CD4-positive, alpha-beta T cell (primary cell): ENCODE measurements at regions of chr5 and their contacts with region 1.

Region 1: DNA sequence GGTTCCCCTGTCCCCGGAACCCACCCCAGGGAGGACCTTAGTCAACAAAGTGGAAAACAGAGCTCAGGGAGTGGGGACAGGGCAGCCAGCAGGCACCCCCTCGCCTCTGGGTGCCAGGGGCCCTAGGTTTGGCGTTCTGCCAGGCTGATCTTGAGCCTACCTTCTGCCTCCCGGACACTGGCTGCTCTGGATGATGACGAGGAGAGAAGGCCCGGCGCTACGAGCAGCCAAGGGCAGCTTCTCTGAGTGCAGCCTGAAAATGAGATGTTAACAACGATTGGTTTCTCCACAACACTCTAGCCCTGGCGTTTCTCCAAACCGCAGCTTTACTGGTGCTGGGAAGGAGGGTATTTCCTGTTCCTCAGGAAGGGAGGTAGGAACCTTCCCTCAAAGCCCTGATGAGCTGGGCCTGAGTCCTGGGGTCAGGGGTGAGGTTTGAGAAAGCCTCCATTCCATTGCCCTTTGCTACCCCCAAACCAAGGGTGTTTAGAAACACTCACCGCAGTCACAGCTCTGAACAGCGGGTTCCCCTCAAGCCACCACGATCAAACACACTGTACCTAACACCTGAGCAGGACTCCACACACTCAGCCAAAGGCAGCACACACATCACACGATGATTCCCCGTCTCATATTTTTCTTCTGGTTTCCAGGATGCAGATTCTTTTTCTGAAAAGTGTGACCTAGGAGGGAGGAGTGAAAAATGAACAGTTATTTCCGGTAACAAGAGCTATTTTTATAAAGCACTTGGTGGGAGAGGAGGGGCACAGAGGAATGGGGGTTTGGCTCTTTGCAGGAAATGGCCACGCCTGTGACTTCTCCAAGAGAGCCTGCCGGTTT is at the start of gene STING1:
- DNase-seq: peak; percentile 40 to 88 (median 60)
- ATAC-seq: peak; percentile 71
- H3K4me3 ChIP-seq: peak within 1 kb of the TSS; percentile 81
- H3K4me3 Mint-ChIP-seq: peak within 1 kb of the TSS; percentile 91
- H3K27ac ChIP-seq: peak within 1 kb of the TSS; percentile 82
- H3K27ac Mint-ChIP-seq: peak within 1 kb of the TSS; percentile 92
- H3K4me1 ChIP-seq: peaks cover 57% of the 10 kb centered on the region
- H3K4me1 Mint-ChIP-seq: peaks cover 37% of the 10 kb centered on the region
- H3K27me3 ChIP-seq: no peaks in the 10 kb centered on the region
- H3K27me3 Mint-ChIP-seq: no peaks in the 10 kb centered on the region
- CTCF ChIP-seq: no peak
- total RNA-seq, gene STING1: 155 to 168 TPM

Region 2: GRCh38 chr5:139430015-139430414 is 52.3 kb before region 1 on chr5:
- CTCF ChIA-PET with region 1: no interaction called
- POLR2A ChIA-PET with region 1: interaction called, 74 read pairs
- intact Hi-C with region 1: no loop called
- DNase-seq: no peak
- ATAC-seq: peak; percentile 87
- H3K4me3 ChIP-seq: no peak overlapping the region
- H3K4me3 Mint-ChIP-seq: no peak overlapping the region
- H3K27ac ChIP-seq: peak overlapping the region in 1 of 2 donors; percentile 41
- H3K27ac Mint-ChIP-seq: peak overlapping the region; percentile 70
- H3K4me1 ChIP-seq: peaks cover 4% of the 10 kb centered on the region
- H3K4me1 Mint-ChIP-seq: peaks cover 16% of the 10 kb centered on the region
- H3K27me3 ChIP-seq: no peaks in the 10 kb centered on the region
- H3K27me3 Mint-ChIP-seq: no peaks in the 10 kb centered on the region
- CTCF ChIP-seq: no peak

Region 3: DNA sequence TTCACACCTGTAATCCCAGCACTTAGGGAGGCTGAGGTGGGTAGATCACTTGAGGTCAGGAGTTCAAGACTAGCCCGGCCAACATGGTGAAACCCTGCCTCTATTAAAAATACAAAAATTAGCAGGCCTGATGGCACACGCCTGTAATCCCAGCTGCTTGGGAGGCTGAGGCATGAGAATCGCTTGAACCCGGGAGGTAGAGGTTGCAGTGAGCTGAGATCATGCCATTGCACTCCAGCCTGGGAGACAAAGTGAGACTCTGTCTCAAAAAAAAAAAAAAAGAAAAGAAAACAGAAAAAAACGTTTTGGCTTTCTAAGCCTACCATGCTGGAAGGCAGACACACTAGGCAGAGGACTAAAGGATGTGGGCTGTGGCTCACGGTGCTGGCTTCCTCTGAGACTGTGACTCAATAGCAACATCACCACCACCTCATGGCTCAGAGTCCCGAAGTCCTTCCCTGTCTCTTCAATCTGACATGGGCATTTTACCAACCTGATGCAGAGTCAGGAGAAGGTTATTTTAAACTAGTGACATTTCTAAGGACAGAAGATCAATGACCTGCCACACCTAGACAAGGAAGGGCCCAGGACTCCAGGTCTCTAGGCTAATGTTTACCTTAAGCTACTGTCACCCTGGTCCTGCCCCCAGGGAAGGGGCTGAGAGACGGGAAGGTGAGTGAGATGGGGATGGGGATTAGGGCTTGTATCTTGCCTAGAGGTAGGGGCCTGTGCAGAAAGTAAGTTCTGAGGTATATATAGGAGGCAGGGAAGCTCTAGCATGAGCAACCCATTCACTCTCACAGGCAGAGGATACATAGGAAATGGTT is 23.5 kb before region 1 on chr5:
- CTCF ChIA-PET with region 1: interaction called, 3 read pairs
- POLR2A ChIA-PET with region 1: interaction called, 25 read pairs
- intact Hi-C with region 1: loop called in 1 of 2 experiments (anchors 1 kb)
- DNase-seq: peak; percentile 55 to 94 (median 73)
- ATAC-seq: peak; percentile 99
- H3K4me3 ChIP-seq: no peak overlapping the region
- H3K4me3 Mint-ChIP-seq: peak overlapping the region; percentile 3
- H3K27ac ChIP-seq: peak overlapping the region; percentile 69 to 83
- H3K27ac Mint-ChIP-seq: peak overlapping the region; percentile 89
- H3K4me1 ChIP-seq: peaks cover 69% of the 10 kb centered on the region
- H3K4me1 Mint-ChIP-seq: peaks cover 76% of the 10 kb centered on the region
- H3K27me3 ChIP-seq: no peaks in the 10 kb centered on the region
- H3K27me3 Mint-ChIP-seq: no peaks in the 10 kb centered on the region
- CTCF ChIP-seq: no peak

Region 4: GRCh38 chr5:139468421-139468931 is 13.8 kb before region 1 on chr5:
- CTCF ChIA-PET with region 1: no interaction called
- POLR2A ChIA-PET with region 1: interaction called, 42 read pairs
- intact Hi-C with region 1: no loop called
- DNase-seq: peak in 1 of 14 experiments; percentile 51
- ATAC-seq: no peak
- H3K4me3 ChIP-seq: no peak overlapping the region
- H3K4me3 Mint-ChIP-seq: peak overlapping the region; percentile 59
- H3K27ac ChIP-seq: no peak overlapping the region
- H3K27ac Mint-ChIP-seq: peak overlapping the region; percentile 92
- H3K4me1 ChIP-seq: peaks cover 61% of the 10 kb centered on the region
- H3K4me1 Mint-ChIP-seq: peaks cover 54% of the 10 kb centered on the region
- H3K27me3 ChIP-seq: no peaks in the 10 kb centered on the region
- H3K27me3 Mint-ChIP-seq: no peaks in the 10 kb centered on the region
- CTCF ChIP-seq: no peak